ENCODE measurements at regions of chr14 and their contacts with region 1.

Region 1: DNA sequence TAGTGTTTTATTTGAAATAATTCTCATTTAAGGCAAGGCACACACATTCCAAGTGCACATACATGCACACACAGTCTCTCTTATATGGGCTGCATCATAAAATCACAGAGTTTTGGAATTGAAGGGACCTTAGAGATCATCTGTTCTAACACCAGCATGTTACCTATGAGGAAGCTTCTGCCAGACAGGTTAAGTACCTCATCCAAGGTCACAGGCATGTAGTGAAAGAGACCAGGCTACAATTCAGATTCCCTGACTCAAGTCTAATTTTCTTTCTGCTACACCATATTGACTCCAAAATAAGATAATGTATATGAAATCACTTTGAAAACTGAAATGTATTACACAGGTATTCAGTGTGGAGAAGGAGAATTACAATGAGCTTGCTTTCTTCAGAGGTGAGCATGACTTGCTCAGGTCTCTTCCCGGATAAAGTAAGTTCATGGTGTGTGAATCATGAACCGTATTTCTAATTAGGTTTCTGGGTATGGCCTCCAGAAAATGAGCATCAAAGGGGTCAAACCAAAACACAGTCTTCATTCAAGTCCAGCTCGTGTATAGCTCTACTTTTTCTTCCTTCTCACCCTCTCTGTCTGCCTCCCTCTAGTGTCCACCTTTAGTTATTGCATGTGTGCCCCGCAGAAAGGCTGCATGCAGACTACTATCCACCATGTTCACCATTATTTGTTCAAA is 411.9 kb downstream of the FUT8 start:
- DNase-seq: peak; percentile 60
- ATAC-seq: peak; percentile 57
- H3K4me3 Mint-ChIP-seq: no peak overlapping the region
- H3K27ac Mint-ChIP-seq: no peak overlapping the region
- H3K4me1 Mint-ChIP-seq: peaks cover 33% of the 10 kb centered on the region
- H3K27me3 Mint-ChIP-seq: peaks cover 3% of the 10 kb centered on the region; the same call in 1 of the 2 replicates
- CTCF ChIP-seq: peak; percentile 91

Region 2: DNA sequence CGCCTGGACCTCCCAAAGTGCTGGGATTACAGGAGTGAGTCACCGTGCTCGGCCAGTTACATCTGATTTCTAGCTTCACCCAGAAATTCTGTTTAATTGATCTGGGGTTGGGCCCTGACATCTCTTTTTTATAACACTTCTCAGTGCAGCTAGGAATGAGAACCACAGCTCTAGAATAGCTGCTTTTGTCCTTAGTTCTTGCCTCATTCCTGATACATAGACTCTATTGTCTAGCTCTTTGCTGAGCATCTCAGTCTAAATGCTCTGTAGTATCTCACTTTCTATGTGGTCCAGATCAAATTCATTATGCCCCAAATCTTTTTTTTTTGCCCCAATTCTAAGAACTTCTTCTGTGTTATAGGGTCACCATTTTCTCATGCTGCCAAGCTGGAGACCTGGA is 441.8 kb before region 1 on chr14:
- CTCF ChIA-PET with region 1: no interaction called
- POLR2A ChIA-PET with region 1: interaction called, 10 read pairs
- DNase-seq: no peak
- ATAC-seq: no peak
- H3K4me3 Mint-ChIP-seq: no peak overlapping the region
- H3K27ac Mint-ChIP-seq: no peak overlapping the region
- H3K4me1 Mint-ChIP-seq: peaks cover 2% of the 10 kb centered on the region; the same call in 1 of the 2 replicates
- H3K27me3 Mint-ChIP-seq: no peaks in the 10 kb centered on the region
- CTCF ChIP-seq: no peak

Region 3: GRCh38 chr14:65750906-65751305 is 73.5 kb before region 1 on chr14:
- CTCF ChIA-PET with region 1: interaction called, 15 read pairs
- POLR2A ChIA-PET with region 1: no interaction called
- DNase-seq: no peak
- ATAC-seq: no peak
- H3K4me3 Mint-ChIP-seq: no peak overlapping the region
- H3K27ac Mint-ChIP-seq: no peak overlapping the region
- H3K4me1 Mint-ChIP-seq: peaks cover 21% of the 10 kb centered on the region
- H3K27me3 Mint-ChIP-seq: peaks cover 9% of the 10 kb centered on the region; the same call in 1 of the 2 replicates
- CTCF ChIP-seq: no peak

Region 4: GRCh38 chr14:65804752-65805473 is 19.5 kb before region 1 on chr14:
- CTCF ChIA-PET with region 1: interaction called, 50 read pairs
- POLR2A ChIA-PET with region 1: no interaction called
- DNase-seq: no peak
- ATAC-seq: no peak
- H3K4me3 Mint-ChIP-seq: no peak overlapping the region
- H3K27ac Mint-ChIP-seq: no peak overlapping the region
- H3K4me1 Mint-ChIP-seq: peaks cover under 1% of the 10 kb centered on the region; the same call in 1 of the 2 replicates
- H3K27me3 Mint-ChIP-seq: no peaks in the 10 kb centered on the region; the same call in 1 of the 2 replicates
- CTCF ChIP-seq: no peak

Region 5: GRCh38 chr14:65958664-65959562 is 134.5 kb after region 1 on chr14:
- CTCF ChIA-PET with region 1: interaction called, 20 read pairs
- POLR2A ChIA-PET with region 1: no interaction called
- DNase-seq: no peak
- ATAC-seq: peak; percentile 35
- H3K4me3 Mint-ChIP-seq: no peak overlapping the region
- H3K27ac Mint-ChIP-seq: no peak overlapping the region
- H3K4me1 Mint-ChIP-seq: peaks cover 31% of the 10 kb centered on the region
- H3K27me3 Mint-ChIP-seq: no peaks in the 10 kb centered on the region
- CTCF ChIP-seq: peak; percentile 27; the same call in 1 of the 2 replicates

Region 6: DNA sequence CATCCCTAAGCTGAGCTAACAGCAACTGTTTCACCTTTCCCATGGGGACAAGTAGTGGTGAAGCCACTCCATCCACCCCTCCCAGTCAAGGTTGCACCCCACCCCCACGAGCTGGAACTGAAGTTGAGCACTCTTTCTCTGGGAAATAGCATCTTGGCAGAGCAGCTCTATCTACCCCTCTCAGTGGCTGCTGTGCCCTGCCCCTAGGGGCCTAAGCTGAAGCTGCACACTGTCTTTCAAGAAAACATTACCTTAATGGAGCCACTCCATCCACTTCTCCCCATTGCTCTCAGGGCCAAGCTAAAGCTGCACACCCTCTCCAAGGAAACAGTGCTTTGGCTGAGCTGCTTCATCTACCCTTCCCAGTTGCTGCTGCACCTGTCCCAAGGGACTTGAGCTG is 491.1 kb after region 1 on chr14:
- CTCF ChIA-PET with region 1: no interaction called
- POLR2A ChIA-PET with region 1: no interaction called
- DNase-seq: peak; percentile 19
- ATAC-seq: peak; percentile 99
- H3K4me3 Mint-ChIP-seq: no peak overlapping the region
- H3K27ac Mint-ChIP-seq: no peak overlapping the region
- H3K4me1 Mint-ChIP-seq: peaks cover 3% of the 10 kb centered on the region; the same call in 1 of the 2 replicates
- H3K27me3 Mint-ChIP-seq: no peaks in the 10 kb centered on the region; the same call in 1 of the 2 replicates
- CTCF ChIP-seq: no peak